Activated CD4-positive, alpha-beta memory T cell treated with anti-CD3 and anti-CD28 coated beads, Interleukin-2, amount 10 ng/mL, durations not matched to agents 7 days and 5 days (primary cell): ENCODE measurements at regions of chr9 and their contacts with region 1.

Region 1: DNA sequence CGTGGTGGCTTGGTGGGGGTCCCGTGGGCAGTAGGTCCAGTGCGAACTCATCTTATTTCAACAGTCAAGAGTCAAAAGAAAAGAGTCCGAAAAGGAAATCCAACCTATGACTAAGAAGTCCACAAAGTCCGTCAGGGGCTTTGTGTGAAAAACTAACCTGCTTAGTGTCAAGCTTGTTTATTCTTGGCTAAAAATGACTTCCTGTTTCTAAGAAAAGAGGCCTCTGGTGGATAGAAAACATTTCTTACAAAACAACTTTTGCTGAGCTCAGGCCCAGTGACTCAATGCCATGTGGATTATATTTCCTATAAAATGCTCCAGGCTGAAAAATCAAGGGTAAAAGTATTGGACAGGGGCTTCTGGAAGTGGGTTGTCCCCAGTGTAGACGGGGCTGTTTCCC is 105.9 kb downstream of the GADD45G start:
- DNase-seq: no peak
- H3K4me3 Mint-ChIP-seq: no peak overlapping the region
- H3K27ac Mint-ChIP-seq: peak overlapping the region; percentile 80
- H3K4me1 Mint-ChIP-seq: peaks cover 92% of the 10 kb centered on the region
- H3K27me3 Mint-ChIP-seq: no peaks in the 10 kb centered on the region

Region 2: GRCh38 chr9:89690334-89690912 is 20.3 kb before region 1 on chr9:
- CTCF ChIA-PET with region 1: interaction called, 3 read pairs
- POLR2A ChIA-PET with region 1: interaction called, 20 read pairs
- DNase-seq: no peak
- H3K4me3 Mint-ChIP-seq: no peak overlapping the region
- H3K27ac Mint-ChIP-seq: peak overlapping the region; percentile 58
- H3K4me1 Mint-ChIP-seq: peaks cover 45% of the 10 kb centered on the region
- H3K27me3 Mint-ChIP-seq: no peaks in the 10 kb centered on the region

Region 3: GRCh38 chr9:89738137-89738932 is 27.6 kb after region 1 on chr9:
- CTCF ChIA-PET with region 1: interaction called, 16 read pairs
- POLR2A ChIA-PET with region 1: interaction called, 34 read pairs
- DNase-seq: no peak
- H3K4me3 Mint-ChIP-seq: no peak overlapping the region
- H3K27ac Mint-ChIP-seq: peak overlapping the region; percentile 92
- H3K4me1 Mint-ChIP-seq: peaks cover 65% of the 10 kb centered on the region
- H3K27me3 Mint-ChIP-seq: peaks cover 4% of the 10 kb centered on the region

Region 4: DNA sequence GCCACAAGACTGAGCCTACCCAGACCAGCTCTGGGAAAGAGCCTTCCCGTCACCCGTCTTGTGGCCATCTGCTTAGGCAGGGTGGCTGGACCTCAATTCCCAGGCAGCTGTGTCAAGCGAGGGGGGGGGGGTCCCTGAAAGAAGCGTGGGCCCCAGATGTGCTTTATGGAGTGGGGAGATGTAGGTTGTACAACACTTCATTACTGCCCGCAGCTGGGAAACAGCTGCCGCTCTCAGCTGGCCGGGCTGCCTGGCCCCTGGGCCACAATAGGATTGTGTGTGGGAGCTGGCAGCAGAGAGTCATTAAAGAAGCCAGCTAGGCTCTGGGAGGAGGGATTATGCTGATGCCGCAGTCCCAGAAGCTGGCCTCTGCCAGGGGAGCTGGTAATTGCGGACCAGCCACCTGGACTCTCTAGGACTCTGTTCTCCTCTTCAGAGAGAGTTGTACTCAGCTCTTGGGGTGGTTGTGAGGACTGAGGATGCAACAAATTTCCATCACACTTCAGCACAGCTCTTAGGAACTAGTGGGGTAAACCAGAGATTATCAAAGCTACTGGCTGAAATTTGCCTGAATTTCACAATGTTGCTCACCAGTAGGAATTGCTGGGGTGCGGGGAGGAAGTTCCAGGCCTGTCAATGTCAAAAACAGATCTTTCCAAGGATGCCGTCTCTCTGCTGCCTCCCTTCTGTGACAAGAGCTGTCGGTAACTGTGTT is 39.6 kb after region 1 on chr9:
- CTCF ChIA-PET with region 1: interaction called, 11 read pairs
- POLR2A ChIA-PET with region 1: interaction called, 28 read pairs
- DNase-seq: no peak
- H3K4me3 Mint-ChIP-seq: no peak overlapping the region
- H3K27ac Mint-ChIP-seq: no peak overlapping the region
- H3K4me1 Mint-ChIP-seq: peaks cover 32% of the 10 kb centered on the region
- H3K27me3 Mint-ChIP-seq: no peaks in the 10 kb centered on the region